Activated CD8-positive, alpha-beta T cell treated with anti-CD3 and anti-CD28 coated beads for 36 hours (primary cell): ENCODE measurements at regions of chr18 and their contacts with region 1.

Region 1: DNA sequence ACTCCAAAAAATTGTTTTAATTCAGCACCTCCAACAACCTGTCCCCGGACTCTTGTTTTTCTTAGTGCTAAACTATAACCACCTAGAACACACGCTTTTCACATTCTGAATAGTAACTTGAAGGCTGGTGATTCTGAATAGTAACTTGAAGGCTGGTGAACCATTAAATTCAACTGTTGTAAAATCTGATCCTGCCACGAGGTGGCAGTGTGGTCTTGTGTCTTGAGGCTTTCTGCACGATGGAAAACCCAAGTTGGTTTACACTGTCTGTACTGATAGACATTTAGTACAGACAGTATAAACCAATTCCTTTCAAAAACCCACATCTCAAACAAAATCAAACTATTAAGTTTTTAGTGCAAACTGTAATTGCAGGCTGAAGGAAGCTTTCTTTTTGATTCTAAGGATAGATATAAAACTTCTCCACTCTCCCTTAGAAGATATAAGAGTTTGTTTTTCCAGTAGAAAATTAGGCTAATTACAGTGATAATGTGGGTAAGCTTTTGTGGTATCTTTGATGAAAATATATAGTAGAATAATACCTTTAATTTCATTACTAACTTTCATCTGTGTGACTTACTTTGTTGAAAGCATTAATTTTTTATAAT is 57.6 kb downstream of the VAPA start:
- DNase-seq: peak; percentile 83
- ATAC-seq: peak; percentile 69
- H3K4me3 Mint-ChIP-seq: no peak overlapping the region
- H3K27ac Mint-ChIP-seq: no peak overlapping the region
- H3K4me1 Mint-ChIP-seq: peaks cover 12% of the 10 kb centered on the region
- H3K27me3 Mint-ChIP-seq: peaks cover 26% of the 10 kb centered on the region
- CTCF ChIP-seq: peak; percentile 68

Region 2: DNA sequence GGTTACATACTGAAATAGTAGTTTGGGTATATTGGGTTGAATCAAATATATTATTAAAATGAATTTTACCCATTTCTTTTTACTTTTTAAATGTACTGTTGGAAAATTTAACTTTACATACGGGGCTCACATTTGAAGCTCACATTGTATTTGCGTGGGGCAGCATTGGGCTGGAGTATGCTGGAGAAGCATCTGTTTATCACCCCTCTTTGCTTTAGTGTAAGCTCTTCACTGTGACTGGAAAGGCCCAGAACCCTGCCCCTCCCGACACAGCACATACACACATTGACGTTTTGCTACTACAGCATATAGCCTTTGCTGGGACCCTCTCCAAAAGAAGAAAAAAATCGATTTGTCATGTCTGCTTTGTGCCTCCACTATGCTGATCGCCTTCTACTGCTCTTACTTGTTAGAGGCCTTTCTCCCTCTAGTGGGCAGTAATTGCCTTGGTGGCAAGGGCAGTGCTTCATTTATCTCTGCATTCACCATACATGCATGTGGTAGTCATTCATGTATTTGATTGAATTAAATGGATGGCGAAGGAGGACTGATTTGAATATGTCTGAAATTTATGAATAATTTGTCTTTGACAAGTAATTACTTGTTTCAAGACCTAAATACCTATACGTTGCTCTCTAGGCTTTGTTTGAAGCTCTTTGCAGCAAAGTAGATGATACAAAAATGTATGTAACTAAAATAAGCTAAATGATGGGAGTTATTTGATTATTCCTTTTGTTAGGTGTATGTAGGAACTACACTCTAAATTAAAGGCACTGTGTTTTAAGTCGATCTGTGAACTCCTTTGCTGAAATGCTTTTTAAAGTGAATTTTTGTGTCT is 20.2 kb before region 1 on chr18:
- CTCF ChIA-PET with region 1: interaction called, 12 read pairs
- POLR2A ChIA-PET with region 1: no interaction called
- intact Hi-C with region 1: no loop called
- DNase-seq: peak; percentile 38
- ATAC-seq: peak; percentile 71
- H3K4me3 Mint-ChIP-seq: no peak overlapping the region
- H3K27ac Mint-ChIP-seq: no peak overlapping the region
- H3K4me1 Mint-ChIP-seq: peaks cover 14% of the 10 kb centered on the region
- H3K27me3 Mint-ChIP-seq: no peaks in the 10 kb centered on the region
- CTCF ChIP-seq: peak; percentile 39

Region 3: DNA sequence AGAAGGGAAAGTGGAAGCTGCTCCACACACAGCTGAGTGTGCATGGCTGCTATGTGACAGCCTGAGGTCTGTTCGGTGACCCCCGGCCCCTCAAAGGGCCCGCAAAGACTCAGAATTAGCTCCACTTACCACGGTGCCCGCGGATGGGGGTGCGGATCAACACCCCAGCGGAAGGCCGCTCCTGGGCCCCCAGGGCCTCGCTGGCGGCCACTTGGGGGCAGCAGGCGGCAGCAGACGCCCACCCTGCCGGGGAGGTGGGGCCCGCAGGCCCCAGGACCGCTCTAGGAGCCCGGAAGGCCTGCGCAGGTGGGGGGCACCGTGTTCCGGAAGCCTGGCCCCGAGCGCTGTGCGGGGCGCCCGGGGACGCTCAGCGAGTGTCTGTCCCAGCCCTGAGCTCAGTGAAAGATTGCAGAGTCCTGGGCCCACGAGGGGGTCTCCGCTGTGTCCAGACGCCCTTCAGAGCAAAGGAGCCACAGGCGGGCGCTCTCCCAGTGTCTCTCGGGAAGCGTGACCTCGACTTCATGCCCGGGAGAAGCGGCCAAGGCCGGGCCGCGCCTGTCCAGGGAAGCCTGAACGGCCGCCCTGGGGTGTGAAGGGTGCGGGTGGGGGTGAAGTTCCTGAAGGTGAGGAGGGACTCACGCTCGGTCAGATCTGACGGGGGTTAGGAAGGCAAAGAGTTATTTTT is 61.1 kb after region 1 on chr18:
- CTCF ChIA-PET with region 1: interaction called, 13 read pairs
- POLR2A ChIA-PET with region 1: interaction called, 3 read pairs
- intact Hi-C with region 1: no loop called
- DNase-seq: peak; percentile 70
- ATAC-seq: peak; percentile 98
- H3K4me3 Mint-ChIP-seq: peak overlapping the region; percentile 72
- H3K27ac Mint-ChIP-seq: peak overlapping the region; percentile 72
- H3K4me1 Mint-ChIP-seq: peaks cover 8% of the 10 kb centered on the region
- H3K27me3 Mint-ChIP-seq: no peaks in the 10 kb centered on the region
- CTCF ChIP-seq: peak; percentile 48

Region 4: DNA sequence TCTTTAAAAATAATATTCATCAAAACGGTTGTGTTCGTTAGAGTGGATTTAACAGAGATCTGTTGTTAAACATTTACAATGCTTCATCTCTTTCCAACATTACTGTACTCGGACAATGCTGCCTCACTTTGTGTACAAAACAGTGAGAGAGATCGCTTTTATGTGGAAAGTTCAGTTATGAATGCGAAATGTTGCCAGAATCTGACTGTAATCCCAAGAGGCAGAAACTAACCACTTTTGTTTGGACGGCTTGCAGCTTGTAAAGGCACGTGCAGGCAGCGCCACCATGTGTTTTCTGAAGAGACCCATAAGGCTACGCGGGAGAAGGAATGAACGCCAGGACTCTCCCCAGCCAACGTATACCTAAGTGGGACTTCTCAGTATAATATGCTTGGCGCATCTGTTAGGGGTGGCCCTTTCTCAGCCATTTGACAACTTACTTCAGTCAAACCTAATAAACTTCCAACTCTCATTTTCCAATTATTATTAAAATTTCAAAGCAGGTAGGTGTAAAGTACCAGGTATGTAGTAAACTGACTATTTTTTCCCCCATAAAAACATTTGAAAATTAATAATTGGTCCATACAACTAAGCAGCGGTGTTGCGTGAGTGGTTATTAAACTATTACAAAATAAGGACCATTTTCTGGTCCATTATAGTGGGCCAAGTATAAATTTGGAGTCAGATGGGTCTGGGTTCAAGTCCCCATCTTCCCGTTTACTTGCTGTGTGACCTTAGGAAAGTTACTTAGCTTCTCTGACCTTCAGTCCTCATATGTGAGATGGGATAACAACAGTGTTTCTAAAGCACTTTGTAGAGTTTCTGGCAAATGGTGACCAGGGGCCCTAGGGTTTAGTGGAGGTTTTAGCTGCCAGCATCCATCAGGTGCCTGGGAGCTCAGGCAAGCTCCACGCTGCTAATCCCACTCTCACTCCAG is 548.9 kb after region 1 on chr18:
- CTCF ChIA-PET with region 1: interaction called, 19 read pairs
- POLR2A ChIA-PET with region 1: no interaction called
- intact Hi-C with region 1: loop called (anchors 2 kb)
- DNase-seq: peak; percentile 78
- ATAC-seq: peak; percentile 88
- H3K4me3 Mint-ChIP-seq: no peak overlapping the region
- H3K27ac Mint-ChIP-seq: no peak overlapping the region
- H3K4me1 Mint-ChIP-seq: peaks cover 18% of the 10 kb centered on the region
- H3K27me3 Mint-ChIP-seq: peaks cover 22% of the 10 kb centered on the region
- CTCF ChIP-seq: peak; percentile 62